CD4-positive, alpha-beta T cell (primary cell): ENCODE measurements at regions of chr22 and their contacts with region 1.

Region 1: DNA sequence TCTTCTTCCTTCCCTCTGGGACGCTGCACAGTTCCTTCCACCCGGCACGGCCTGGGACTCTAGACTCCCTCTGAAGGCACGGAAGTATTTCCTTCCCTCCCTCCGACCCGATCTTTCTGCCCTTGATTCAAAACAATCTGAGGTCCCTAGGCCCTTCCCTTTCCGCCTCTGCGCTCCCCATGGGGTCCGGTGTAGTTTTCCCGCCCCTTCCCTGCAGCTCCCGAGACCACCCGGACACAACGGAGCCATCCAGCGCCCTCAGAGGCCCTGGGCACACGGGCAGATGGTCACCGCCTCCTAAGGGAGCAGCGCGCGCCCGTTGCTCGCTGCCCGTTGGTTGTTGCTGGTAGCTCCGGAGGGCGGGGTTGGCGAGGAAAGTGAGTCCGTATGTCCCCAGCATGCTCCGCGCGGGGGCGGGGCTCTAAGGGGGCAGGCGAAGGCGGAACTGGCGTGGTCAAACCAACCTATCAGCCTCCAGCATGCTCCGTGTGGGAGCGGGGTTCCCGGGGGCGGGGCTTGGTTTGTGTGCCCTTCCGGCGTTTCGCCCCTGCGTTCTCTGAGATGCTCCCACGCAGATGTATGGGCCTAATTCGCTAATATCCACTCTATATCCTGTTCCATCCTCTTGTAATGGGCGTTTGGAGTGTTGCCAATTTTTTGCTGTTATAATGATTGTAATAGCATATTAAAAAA is 19.6 kb downstream of the MIF start:
- DNase-seq: peak; percentile 97 to 100 (median 99)
- ATAC-seq: peak; percentile 99
- H3K4me3 ChIP-seq: peak overlapping the region; percentile 85
- H3K4me3 Mint-ChIP-seq: peak overlapping the region; percentile 88
- H3K27ac ChIP-seq: peak overlapping the region; percentile 81 to 89
- H3K27ac Mint-ChIP-seq: peak overlapping the region; percentile 85
- H3K4me1 ChIP-seq: peaks cover 11% of the 10 kb centered on the region
- H3K4me1 Mint-ChIP-seq: peaks cover 17% of the 10 kb centered on the region
- H3K27me3 ChIP-seq: no peaks in the 10 kb centered on the region
- H3K27me3 Mint-ChIP-seq: no peaks in the 10 kb centered on the region
- CTCF ChIP-seq: no peak

Region 2: GRCh38 chr22:23716811-23717801 is 196.7 kb before region 1 on chr22:
- CTCF ChIA-PET with region 1: no interaction called
- POLR2A ChIA-PET with region 1: interaction called, 3 read pairs
- intact Hi-C with region 1: loop called in 1 of 2 experiments (anchors 5 kb)
- DNase-seq: peak; percentile 65 to 92 (median 76)
- ATAC-seq: peak; percentile 97
- H3K4me3 ChIP-seq: peak overlapping the region; percentile 93
- H3K4me3 Mint-ChIP-seq: peak overlapping the region; percentile 90
- H3K27ac ChIP-seq: peak overlapping the region; percentile 64 to 68
- H3K27ac Mint-ChIP-seq: peak overlapping the region; percentile 85
- H3K4me1 ChIP-seq: peaks cover 27% of the 10 kb centered on the region
- H3K4me1 Mint-ChIP-seq: peaks cover 16% of the 10 kb centered on the region
- H3K27me3 ChIP-seq: no peaks in the 10 kb centered on the region
- H3K27me3 Mint-ChIP-seq: no peaks in the 10 kb centered on the region
- CTCF ChIP-seq: no peak

Region 3: GRCh38 chr22:23893943-23894709 is 19.7 kb before region 1 on chr22 and contains the start of gene MIF:
- CTCF ChIA-PET with region 1: interaction called, 13 read pairs
- POLR2A ChIA-PET with region 1: interaction called, 89 read pairs
- intact Hi-C with region 1: loop called (anchors 1 to 2 kb)
- DNase-seq: peak; percentile 85 to 98 (median 94)
- ATAC-seq: peak; percentile 78
- H3K4me3 ChIP-seq: peak within 1 kb of the TSS; percentile 79
- H3K4me3 Mint-ChIP-seq: peak within 1 kb of the TSS; percentile 95
- H3K27ac ChIP-seq: peak within 1 kb of the TSS; percentile 84 to 91
- H3K27ac Mint-ChIP-seq: peak within 1 kb of the TSS; percentile 97
- H3K4me1 ChIP-seq: peaks cover 30% of the 10 kb centered on the region
- H3K4me1 Mint-ChIP-seq: peaks cover 29% of the 10 kb centered on the region
- H3K27me3 ChIP-seq: no peaks in the 10 kb centered on the region
- H3K27me3 Mint-ChIP-seq: no peaks in the 10 kb centered on the region
- CTCF ChIP-seq: peak; percentile 90
- total RNA-seq, gene MIF: 213 to 226 TPM

Region 4: DNA sequence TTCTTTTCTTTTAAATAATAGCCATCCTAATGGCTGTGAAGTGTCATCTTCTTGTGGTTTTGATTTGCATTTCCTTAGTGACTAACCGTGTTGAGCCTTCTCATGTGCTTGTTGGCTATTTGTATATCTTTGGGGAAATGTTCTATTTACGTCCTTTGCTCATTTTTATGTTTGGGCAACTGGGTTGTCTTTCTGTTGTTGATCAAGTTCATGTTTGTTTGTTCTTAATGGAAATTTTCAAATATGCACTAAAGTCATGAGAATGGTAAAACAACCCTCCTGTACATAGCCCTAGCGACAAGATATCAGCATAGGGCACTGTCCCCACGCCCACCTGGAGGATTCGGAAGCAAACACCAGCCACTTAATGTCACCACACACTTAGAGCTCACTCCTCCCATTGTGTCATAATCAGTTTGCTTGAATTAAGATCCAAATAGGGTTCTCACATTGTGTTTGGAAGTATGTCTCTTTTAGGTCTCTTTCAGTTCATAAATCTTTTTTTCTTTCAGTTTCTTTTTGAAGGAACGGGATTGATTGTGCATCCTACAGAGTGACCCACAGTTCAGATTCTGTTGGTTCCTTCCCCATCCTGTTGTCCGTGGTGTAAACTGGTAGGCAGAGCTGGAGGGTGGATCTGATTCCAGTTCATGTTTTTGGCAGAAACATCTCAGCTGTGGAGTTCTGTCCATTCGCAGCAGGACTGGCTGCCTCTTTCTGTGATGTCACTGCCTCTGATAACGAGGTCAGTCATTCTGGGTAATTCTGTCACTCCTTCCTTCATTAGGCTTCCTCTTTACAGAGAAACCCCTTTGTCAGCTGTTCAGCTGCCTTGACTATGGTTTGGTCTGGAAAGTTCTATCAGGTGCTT is 487.2 kb after region 1 on chr22:
- CTCF ChIA-PET with region 1: no interaction called
- POLR2A ChIA-PET with region 1: no interaction called
- intact Hi-C with region 1: no loop called
- DNase-seq: peak in 2 of 14 experiments; percentile 44 to 55
- ATAC-seq: no peak
- H3K4me3 ChIP-seq: no peak overlapping the region
- H3K4me3 Mint-ChIP-seq: peak overlapping the region; percentile 13
- H3K27ac ChIP-seq: no peak overlapping the region
- H3K27ac Mint-ChIP-seq: peak overlapping the region; percentile 37
- H3K4me1 ChIP-seq: no peaks in the 10 kb centered on the region
- H3K4me1 Mint-ChIP-seq: peaks cover 21% of the 10 kb centered on the region
- H3K27me3 ChIP-seq: no peaks in the 10 kb centered on the region
- H3K27me3 Mint-ChIP-seq: no peaks in the 10 kb centered on the region
- CTCF ChIP-seq: no peak

Region 5: DNA sequence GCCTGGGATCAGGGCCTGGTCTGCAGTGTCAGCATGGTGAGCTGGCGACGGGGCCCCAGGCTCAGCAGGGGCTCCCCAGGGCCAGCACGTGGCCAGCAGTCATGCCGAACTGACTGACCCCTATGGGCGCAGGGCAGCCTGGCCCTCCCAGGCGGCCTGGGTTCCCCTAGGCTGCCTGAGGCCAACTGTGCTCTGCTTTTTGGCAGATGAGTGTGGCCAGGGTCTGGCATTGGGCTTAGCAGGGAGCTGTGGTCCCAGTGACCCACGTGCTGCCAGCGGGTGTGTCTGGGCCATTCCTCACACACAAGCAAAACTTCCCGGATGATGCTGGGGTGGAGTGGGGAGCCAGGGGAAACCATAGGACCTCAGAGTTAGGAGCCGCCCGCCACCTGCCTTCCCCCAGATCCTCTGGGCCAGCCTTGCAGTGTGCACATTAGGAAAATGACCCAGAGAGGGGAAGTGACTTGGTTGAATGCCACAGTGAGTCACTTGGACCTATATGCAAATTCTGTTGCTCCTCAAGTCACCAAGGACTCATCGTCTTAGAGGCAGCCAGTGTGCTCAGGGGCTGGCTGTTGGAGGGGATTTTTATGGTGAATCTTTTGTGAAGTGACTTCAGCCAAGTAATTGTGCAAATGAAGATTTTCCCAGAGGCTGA is 520.1 kb after region 1 on chr22:
- CTCF ChIA-PET with region 1: no interaction called
- POLR2A ChIA-PET with region 1: no interaction called
- intact Hi-C with region 1: loop called in 1 of 2 experiments (anchors 10 kb)
- DNase-seq: peak in 4 of 14 experiments; percentile 19 to 77 (median 54)
- ATAC-seq: peak; percentile 43
- H3K4me3 ChIP-seq: no peak overlapping the region
- H3K4me3 Mint-ChIP-seq: peak overlapping the region; percentile 82
- H3K27ac ChIP-seq: peak overlapping the region; percentile 66 to 98
- H3K27ac Mint-ChIP-seq: peak overlapping the region; percentile 92
- H3K4me1 ChIP-seq: peaks cover 93% of the 10 kb centered on the region
- H3K4me1 Mint-ChIP-seq: peaks cover 93% of the 10 kb centered on the region
- H3K27me3 ChIP-seq: no peaks in the 10 kb centered on the region
- H3K27me3 Mint-ChIP-seq: no peaks in the 10 kb centered on the region
- CTCF ChIP-seq: no peak

Region 6: GRCh38 chr22:24805790-24806662 is 892.2 kb after region 1 on chr22 and contains the start of gene SGSM1:
- CTCF ChIA-PET with region 1: no interaction called
- POLR2A ChIA-PET with region 1: no interaction called
- intact Hi-C with region 1: loop called in 1 of 2 experiments (anchors 10 kb)
- DNase-seq: peak; percentile 53 to 90 (median 72)
- ATAC-seq: peak; percentile 86
- H3K4me3 ChIP-seq: peak within 1 kb of the TSS; percentile 72
- H3K4me3 Mint-ChIP-seq: peak within 1 kb of the TSS; percentile 76
- H3K27ac ChIP-seq: no peak within 1 kb of the TSS
- H3K27ac Mint-ChIP-seq: peak within 1 kb of the TSS; percentile 37
- H3K4me1 ChIP-seq: peaks cover 34% of the 10 kb centered on the region
- H3K4me1 Mint-ChIP-seq: peaks cover 30% of the 10 kb centered on the region
- H3K27me3 ChIP-seq: no peaks in the 10 kb centered on the region
- H3K27me3 Mint-ChIP-seq: no peaks in the 10 kb centered on the region
- CTCF ChIP-seq: no peak
- total RNA-seq, gene SGSM1: 1.3 to 1.9 TPM